ENCODE measurements at regions of chr21 and their contacts with region 1.

Region 1: GRCh38 chr21:7947422-7947821 is 2574.0 kb upstream of the TPTE start:
- DNase-seq: no peak
- ATAC-seq: no peak
- H3K4me3 ChIP-seq: no peak overlapping the region
- H3K4me3 Mint-ChIP-seq: no peak overlapping the region
- H3K27ac ChIP-seq: no peak overlapping the region
- H3K27ac Mint-ChIP-seq: no peak overlapping the region
- H3K4me1 ChIP-seq: no peaks in the 10 kb centered on the region
- H3K4me1 Mint-ChIP-seq: no peaks in the 10 kb centered on the region
- H3K27me3 ChIP-seq: no peaks in the 10 kb centered on the region
- H3K27me3 Mint-ChIP-seq: no peaks in the 10 kb centered on the region
- CTCF ChIP-seq: no peak

Region 2: GRCh38 chr21:7933833-7934322 is 13.5 kb before region 1 on chr21:
- CTCF ChIA-PET with region 1: no interaction called
- POLR2A ChIA-PET with region 1: no interaction called
- intact Hi-C with region 1: loop called in 1 of 2 experiments (anchors 1 kb)
- DNase-seq: no peak
- ATAC-seq: no peak
- H3K4me3 ChIP-seq: no peak overlapping the region
- H3K4me3 Mint-ChIP-seq: no peak overlapping the region
- H3K27ac ChIP-seq: no peak overlapping the region
- H3K27ac Mint-ChIP-seq: no peak overlapping the region
- H3K4me1 ChIP-seq: no peaks in the 10 kb centered on the region
- H3K4me1 Mint-ChIP-seq: no peaks in the 10 kb centered on the region
- H3K27me3 ChIP-seq: no peaks in the 10 kb centered on the region
- H3K27me3 Mint-ChIP-seq: no peaks in the 10 kb centered on the region
- CTCF ChIP-seq: no peak

Measured in CD8-positive, alpha-beta T cell (primary cell).